Natural killer cell (primary cell): ENCODE measurements at regions of chr1 and their contacts with region 1.

Region 1: DNA sequence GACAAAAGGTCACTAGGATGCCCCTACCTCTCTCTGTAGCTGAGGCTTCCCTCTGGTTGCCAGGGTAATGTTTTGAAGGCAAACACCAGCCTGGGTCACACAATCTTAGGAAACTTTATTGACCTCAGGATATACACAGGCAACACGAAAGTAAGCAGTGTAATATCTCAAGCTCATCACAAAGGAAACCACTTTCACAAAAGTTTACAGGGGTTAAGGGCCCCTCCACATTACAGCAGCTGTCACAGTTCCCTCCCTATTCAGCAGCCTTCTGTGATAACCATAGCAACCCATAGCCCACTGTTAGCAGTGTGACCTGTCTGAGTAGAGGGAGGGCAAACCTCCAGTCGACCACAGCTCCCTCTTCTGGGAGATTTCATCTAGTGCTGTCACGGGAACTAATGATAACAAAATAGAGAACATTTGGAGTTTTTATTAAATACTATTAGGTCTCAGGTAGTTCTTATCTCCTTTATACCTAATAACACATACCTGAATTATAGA is 149.8 kb downstream of the PTPRC start:
- DNase-seq: peak; percentile 53 to 71
- ATAC-seq: peak; percentile 96 to 98 (median 98)
- H3K4me3 ChIP-seq: no peak overlapping the region
- H3K4me3 Mint-ChIP-seq: peak overlapping the region; percentile 18
- H3K27ac ChIP-seq: peak overlapping the region; percentile 81
- H3K27ac Mint-ChIP-seq: peak overlapping the region; percentile 87 to 91
- H3K4me1 ChIP-seq: peaks cover 13% of the 10 kb centered on the region
- H3K4me1 Mint-ChIP-seq: peaks cover 45 to 50% of the 10 kb centered on the region in 2 donors
- H3K27me3 ChIP-seq: no peaks in the 10 kb centered on the region
- H3K27me3 Mint-ChIP-seq: no peaks in the 10 kb centered on the region
- CTCF ChIP-seq: peak; percentile 53

Region 2: DNA sequence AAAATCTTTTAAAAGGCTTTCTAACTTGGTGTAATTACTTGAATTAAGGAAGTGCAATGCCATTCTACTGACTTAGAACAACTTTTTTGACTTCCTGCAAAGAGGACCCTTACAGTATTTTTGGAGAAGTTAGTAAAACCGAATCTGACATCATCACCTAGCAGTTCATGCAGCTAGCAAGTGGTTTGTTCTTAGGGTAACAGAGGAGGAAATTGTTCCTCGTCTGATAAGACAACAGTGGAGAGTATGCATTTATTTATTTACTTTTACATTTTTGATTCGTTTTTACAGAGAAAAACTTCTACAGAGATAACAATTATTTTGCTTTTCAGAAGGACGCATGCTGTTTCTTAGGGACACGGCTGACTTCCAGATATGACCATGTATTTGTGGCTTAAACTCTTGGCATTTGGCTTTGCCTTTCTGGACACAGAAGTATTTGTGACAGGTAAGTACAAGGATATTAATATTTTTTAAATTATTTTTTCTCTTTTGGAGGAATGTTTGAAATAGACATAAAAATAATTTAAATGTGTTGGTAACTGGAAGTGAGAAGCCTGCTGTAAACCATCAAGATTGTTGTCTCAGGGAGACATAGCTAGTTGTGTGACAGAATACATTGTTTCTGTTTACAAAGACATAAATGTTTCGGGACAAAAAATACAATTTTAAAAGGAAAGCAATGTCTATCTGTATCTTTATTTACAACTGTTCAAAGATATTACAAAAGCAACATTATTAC is 149.5 kb before region 1 on chr1 and contains the start of gene PTPRC:
- intact Hi-C with region 1: no loop called
- DNase-seq: peak in 1 of 2 donors; percentile 77
- ATAC-seq: peak; percentile 64 to 84 (median 74)
- H3K4me3 ChIP-seq: peak within 1 kb of the TSS; percentile 99
- H3K4me3 Mint-ChIP-seq: peak within 1 kb of the TSS; percentile 99
- H3K27ac ChIP-seq: peak within 1 kb of the TSS; percentile 80
- H3K27ac Mint-ChIP-seq: peak within 1 kb of the TSS; percentile 90 to 94
- H3K4me1 ChIP-seq: peaks cover 18% of the 10 kb centered on the region
- H3K4me1 Mint-ChIP-seq: peaks cover 60 to 61% of the 10 kb centered on the region in 2 donors
- H3K27me3 ChIP-seq: no peaks in the 10 kb centered on the region
- H3K27me3 Mint-ChIP-seq: no peaks in the 10 kb centered on the region
- CTCF ChIP-seq: no peak
- total RNA-seq, gene PTPRC: 1,142 to 1,334 (median 1,200) TPM

Region 3: DNA sequence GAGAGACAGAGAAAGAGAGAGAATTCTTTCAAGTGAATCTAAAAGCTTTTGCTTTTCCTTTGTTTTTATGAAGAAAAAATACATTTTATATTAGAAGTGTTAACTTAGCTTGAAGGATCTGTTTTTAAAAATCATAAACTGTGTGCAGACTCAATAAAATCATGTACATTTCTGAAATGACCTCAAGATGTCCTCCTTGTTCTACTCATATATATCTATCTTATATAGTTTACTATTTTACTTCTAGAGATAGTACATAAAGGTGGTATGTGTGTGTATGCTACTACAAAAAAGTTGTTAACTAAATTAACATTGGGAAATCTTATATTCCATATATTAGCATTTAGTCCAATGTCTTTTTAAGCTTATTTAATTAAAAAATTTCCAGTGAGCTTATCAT is 32.1 kb before region 1 on chr1:
- intact Hi-C with region 1: loop called (anchors 5 kb)
- DNase-seq: peak in 1 of 2 donors; percentile 35
- ATAC-seq: peak; percentile 49 to 79 (median 54)
- H3K4me3 ChIP-seq: no peak overlapping the region
- H3K4me3 Mint-ChIP-seq: no peak overlapping the region
- H3K27ac ChIP-seq: no peak overlapping the region
- H3K27ac Mint-ChIP-seq: peak overlapping the region; percentile 67 to 89
- H3K4me1 ChIP-seq: no peaks in the 10 kb centered on the region
- H3K4me1 Mint-ChIP-seq: peaks cover 26 to 34% of the 10 kb centered on the region in 2 donors
- H3K27me3 ChIP-seq: no peaks in the 10 kb centered on the region
- H3K27me3 Mint-ChIP-seq: no peaks in the 10 kb centered on the region
- CTCF ChIP-seq: peak; percentile 24

Region 4: DNA sequence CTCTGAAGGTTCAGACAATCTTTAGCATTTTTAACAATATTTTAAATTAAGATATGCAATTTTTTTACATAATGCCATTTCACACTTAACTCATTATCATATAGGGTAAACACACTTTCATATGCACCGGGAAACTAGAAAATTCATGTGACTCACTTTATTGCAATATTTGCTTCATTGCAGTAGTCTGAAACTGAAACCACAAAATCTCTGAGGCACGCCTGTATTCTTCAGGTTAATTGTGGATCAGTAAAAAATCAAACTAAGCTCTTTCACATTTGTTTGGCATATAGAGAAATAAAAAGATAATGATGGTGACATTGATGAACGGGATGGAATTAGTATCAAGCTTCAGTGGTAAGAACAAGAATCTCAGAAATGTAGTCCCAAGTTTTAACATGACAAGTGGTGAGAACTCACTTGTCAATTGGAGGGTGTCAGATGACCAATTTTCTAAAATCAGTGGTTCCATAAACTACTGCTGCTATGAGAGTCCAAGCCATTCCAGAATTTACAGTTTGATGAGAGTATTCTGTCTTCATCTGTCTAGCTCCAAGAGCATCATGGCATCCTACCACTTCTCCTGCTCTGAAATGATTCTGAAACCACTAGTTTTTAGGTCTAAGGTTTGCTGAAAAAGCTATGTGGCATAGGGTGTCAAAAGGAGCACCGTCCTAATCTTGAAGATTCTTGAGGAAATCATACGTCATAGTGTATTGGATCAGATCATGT is 131.2 kb after region 1 on chr1:
- intact Hi-C with region 1: loop called (anchors 5 kb)
- DNase-seq: peak in 1 of 2 donors; percentile 49
- ATAC-seq: peak; percentile 70 to 80 (median 71)
- H3K4me3 ChIP-seq: no peak overlapping the region
- H3K4me3 Mint-ChIP-seq: peak overlapping the region; percentile 85
- H3K27ac ChIP-seq: peak overlapping the region; percentile 66
- H3K27ac Mint-ChIP-seq: peak overlapping the region; percentile 91 to 92
- H3K4me1 ChIP-seq: peaks cover 12% of the 10 kb centered on the region
- H3K4me1 Mint-ChIP-seq: peaks cover 77 to 79% of the 10 kb centered on the region in 2 donors
- H3K27me3 ChIP-seq: no peaks in the 10 kb centered on the region
- H3K27me3 Mint-ChIP-seq: no peaks in the 10 kb centered on the region
- CTCF ChIP-seq: no peak

Region 5: GRCh38 chr1:199089393-199090122 is 300.9 kb after region 1 on chr1:
- intact Hi-C with region 1: loop called (anchors 5 kb)
- DNase-seq: peak; percentile 36 to 83
- ATAC-seq: peak; percentile 94 to 98 (median 96)
- H3K4me3 ChIP-seq: no peak overlapping the region
- H3K4me3 Mint-ChIP-seq: peak overlapping the region; percentile 68
- H3K27ac ChIP-seq: no peak overlapping the region
- H3K27ac Mint-ChIP-seq: peak overlapping the region; percentile 67 to 70
- H3K4me1 ChIP-seq: no peaks in the 10 kb centered on the region
- H3K4me1 Mint-ChIP-seq: peaks cover 33 to 48% of the 10 kb centered on the region in 2 donors
- H3K27me3 ChIP-seq: no peaks in the 10 kb centered on the region
- H3K27me3 Mint-ChIP-seq: peaks cover 0 to 3% of the 10 kb centered on the region in 2 donors
- CTCF ChIP-seq: no peak

Region 6: DNA sequence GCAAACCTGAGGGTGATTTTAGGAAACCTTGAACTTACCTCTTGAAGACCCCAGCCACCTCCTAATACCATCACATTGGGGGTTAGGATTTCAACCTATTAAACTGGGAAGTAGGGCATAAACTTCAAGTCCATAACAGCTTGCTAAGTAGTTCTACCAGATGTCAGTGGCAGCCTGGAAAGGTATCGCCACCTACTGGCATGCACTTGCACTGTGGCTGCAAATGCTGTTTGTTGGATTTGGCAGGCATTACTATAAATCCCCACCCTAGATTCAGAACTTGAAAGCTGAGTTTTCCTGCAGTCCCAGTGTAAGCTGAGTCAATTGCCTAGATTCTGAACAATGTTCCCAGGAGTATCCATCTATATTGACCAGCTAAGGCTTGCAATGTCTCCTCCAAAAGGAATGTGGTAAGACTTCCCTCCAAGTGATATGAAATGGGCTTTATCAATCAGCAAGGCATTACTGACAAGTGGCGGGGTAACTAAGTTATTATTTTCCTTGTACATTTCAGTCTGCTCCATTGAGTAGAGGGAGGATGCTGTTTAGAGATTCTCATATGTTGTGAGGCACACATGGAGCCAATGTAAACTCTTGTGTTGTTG is 324.8 kb after region 1 on chr1:
- intact Hi-C with region 1: loop called (anchors 1 kb)
- DNase-seq: peak; percentile 52 to 81
- ATAC-seq: peak; percentile 77 to 87 (median 84)
- H3K4me3 ChIP-seq: no peak overlapping the region
- H3K4me3 Mint-ChIP-seq: no peak overlapping the region
- H3K27ac ChIP-seq: no peak overlapping the region
- H3K27ac Mint-ChIP-seq: peak overlapping the region in 1 of 2 donors; percentile 9
- H3K4me1 ChIP-seq: no peaks in the 10 kb centered on the region
- H3K4me1 Mint-ChIP-seq: peaks cover 11 to 18% of the 10 kb centered on the region in 2 donors
- H3K27me3 ChIP-seq: no peaks in the 10 kb centered on the region
- H3K27me3 Mint-ChIP-seq: no peaks in the 10 kb centered on the region
- CTCF ChIP-seq: peak; percentile 95

Region 7: GRCh38 chr1:199173356-199173755 is 384.7 kb after region 1 on chr1:
- intact Hi-C with region 1: loop called (anchors 5 kb)
- DNase-seq: peak in 1 of 2 donors; percentile 77
- ATAC-seq: peak; percentile 77 to 92 (median 89)
- H3K4me3 ChIP-seq: no peak overlapping the region
- H3K4me3 Mint-ChIP-seq: peak overlapping the region; percentile 49
- H3K27ac ChIP-seq: peak overlapping the region; percentile 90
- H3K27ac Mint-ChIP-seq: peak overlapping the region; percentile 88 to 94
- H3K4me1 ChIP-seq: peaks cover 37% of the 10 kb centered on the region
- H3K4me1 Mint-ChIP-seq: peaks cover 65 to 78% of the 10 kb centered on the region in 2 donors
- H3K27me3 ChIP-seq: no peaks in the 10 kb centered on the region
- H3K27me3 Mint-ChIP-seq: no peaks in the 10 kb centered on the region
- CTCF ChIP-seq: no peak